IMR-90 (cell line): ENCODE measurements at regions of chr4 and their contacts with region 1.

Region 1: GRCh38 chr4:5747738-5748365 is 36.9 kb downstream of the EVC start:
- DNase-seq: peak; percentile 99
- ATAC-seq: peak; percentile 64
- H3K4me3 ChIP-seq: no peak overlapping the region
- H3K27ac ChIP-seq: peak overlapping the region; percentile 67
- H3K4me1 ChIP-seq: peaks cover 44% of the 10 kb centered on the region
- H3K27me3 ChIP-seq: no peaks in the 10 kb centered on the region
- CTCF ChIP-seq: no peak
- POLR2A ChIP-seq: no peak
- RAD21 ChIP-seq: no peak

Region 2: GRCh38 chr4:5791654-5792053 is 43.8 kb after region 1 on chr4:
- CTCF ChIA-PET with region 1: no interaction called
- POLR2A ChIA-PET with region 1: interaction called, 3 read pairs
- dilution Hi-C with region 1: no loop called
- in situ Hi-C with region 1: no loop called
- intact Hi-C with region 1: loop called (anchors 5 kb)
- DNase-seq: no peak
- ATAC-seq: no peak
- H3K4me3 ChIP-seq: no peak overlapping the region
- H3K27ac ChIP-seq: no peak overlapping the region
- H3K4me1 ChIP-seq: no peaks in the 10 kb centered on the region
- H3K27me3 ChIP-seq: no peaks in the 10 kb centered on the region
- CTCF ChIP-seq: no peak
- POLR2A ChIP-seq: no peak
- RAD21 ChIP-seq: no peak